ENCODE measurements at regions of chr3 and their contacts with region 1.

Region 1: DNA sequence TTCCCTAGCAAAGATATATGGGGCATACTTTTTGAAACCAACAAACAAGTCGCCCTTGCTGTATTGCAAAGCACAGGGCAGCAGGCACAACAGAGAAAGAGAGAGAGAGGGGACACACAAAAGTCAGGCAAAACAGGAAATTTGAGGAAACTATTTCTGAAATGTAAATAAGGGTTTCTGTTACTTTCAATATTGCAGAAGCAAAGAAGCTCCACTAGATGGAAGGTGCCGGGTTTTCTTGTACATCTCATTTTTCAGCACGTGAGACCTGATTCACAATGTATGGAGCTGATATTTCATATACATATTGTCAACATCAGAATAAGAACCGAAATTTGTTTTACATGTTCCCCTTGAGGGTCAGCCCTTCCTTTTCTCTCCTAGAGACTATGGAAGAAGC is 127.4 kb downstream of the FOXP1 start:
- DNase-seq: peak in 2 of 9 experiments; percentile 46 to 70
- ATAC-seq: peak; percentile 39
- H3K4me3 ChIP-seq: peak overlapping the region; percentile 22 to 32
- H3K4me3 Mint-ChIP-seq: peak overlapping the region; percentile 81
- H3K27ac ChIP-seq: peak overlapping the region; percentile 57 to 78
- H3K27ac Mint-ChIP-seq: peak overlapping the region; percentile 99
- H3K4me1 ChIP-seq: peaks cover 85% of the 10 kb centered on the region
- H3K4me1 Mint-ChIP-seq: peaks cover 95% of the 10 kb centered on the region
- H3K27me3 ChIP-seq: no peaks in the 10 kb centered on the region
- H3K27me3 Mint-ChIP-seq: no peaks in the 10 kb centered on the region
- CTCF ChIP-seq: peak; percentile 50

Region 2: GRCh38 chr3:71416876-71417275 is 39.3 kb before region 1 on chr3:
- CTCF ChIA-PET with region 1: interaction called, 5 read pairs
- POLR2A ChIA-PET with region 1: interaction called, 6 read pairs
- intact Hi-C with region 1: loop called in 1 of 2 experiments (anchors 5 kb)
- DNase-seq: peak in 6 of 9 experiments; percentile 41 to 82 (median 60)
- ATAC-seq: peak; percentile 67
- H3K4me3 ChIP-seq: peak overlapping the region in 1 of 2 experiments; percentile 11
- H3K4me3 Mint-ChIP-seq: peak overlapping the region; percentile 54
- H3K27ac ChIP-seq: peak overlapping the region; percentile 60 to 63
- H3K27ac Mint-ChIP-seq: peak overlapping the region; percentile 93
- H3K4me1 ChIP-seq: peaks cover 81% of the 10 kb centered on the region
- H3K4me1 Mint-ChIP-seq: peaks cover 92% of the 10 kb centered on the region
- H3K27me3 ChIP-seq: no peaks in the 10 kb centered on the region
- H3K27me3 Mint-ChIP-seq: no peaks in the 10 kb centered on the region
- CTCF ChIP-seq: peak; percentile 31

Region 3: GRCh38 chr3:71487418-71487817 is 31.3 kb after region 1 on chr3:
- CTCF ChIA-PET with region 1: interaction called, 8 read pairs
- POLR2A ChIA-PET with region 1: interaction called, 79 read pairs
- intact Hi-C with region 1: loop called in 1 of 2 experiments (anchors 1 kb)
- DNase-seq: peak in 1 of 9 experiments; percentile 56
- ATAC-seq: no peak
- H3K4me3 ChIP-seq: peak overlapping the region in 1 of 2 experiments; percentile 33
- H3K4me3 Mint-ChIP-seq: peak overlapping the region; percentile 76
- H3K27ac ChIP-seq: peak overlapping the region; percentile 71 to 92
- H3K27ac Mint-ChIP-seq: peak overlapping the region; percentile 95
- H3K4me1 ChIP-seq: peaks cover 97% of the 10 kb centered on the region
- H3K4me1 Mint-ChIP-seq: peaks cover 84% of the 10 kb centered on the region
- H3K27me3 ChIP-seq: no peaks in the 10 kb centered on the region
- H3K27me3 Mint-ChIP-seq: no peaks in the 10 kb centered on the region
- CTCF ChIP-seq: no peak

Measured in CD8-positive, alpha-beta T cell (primary cell).